Mammary epithelial cell (primary cell): ENCODE measurements at regions of chr6 and their contacts with region 1.

Region 1: DNA sequence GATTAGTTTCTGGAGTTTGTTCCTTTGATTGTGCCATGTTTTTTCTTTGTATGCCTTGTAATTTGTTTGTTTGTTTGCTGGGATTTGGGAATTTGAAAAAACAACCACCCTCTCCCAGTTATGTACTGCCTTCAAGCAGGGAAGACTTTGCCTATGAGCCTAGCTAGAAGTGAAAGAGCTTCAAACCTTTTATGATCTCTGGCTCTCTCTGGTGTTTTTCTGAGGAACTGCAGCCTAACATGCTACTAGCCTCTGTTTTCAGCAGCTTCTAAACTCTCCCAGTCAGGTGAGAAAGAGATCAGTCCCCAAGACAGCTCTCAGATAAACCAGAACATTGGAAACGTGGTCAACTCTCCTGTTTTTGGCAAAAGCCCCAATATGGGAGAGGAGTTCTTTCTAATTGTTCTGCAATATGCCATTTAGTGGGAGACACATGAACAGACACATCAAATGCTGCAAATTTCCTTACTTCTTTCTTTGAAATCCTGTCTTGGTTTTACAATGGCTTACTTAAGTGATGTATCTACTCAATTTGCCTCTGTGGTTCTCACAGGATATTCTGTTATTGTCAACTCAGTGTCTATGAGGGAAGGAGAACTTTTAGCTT is 58.9 kb upstream of the SERINC1 start:
- DNase-seq: peak; percentile 62
- H3K4me3 ChIP-seq: no peak overlapping the region
- H3K27ac ChIP-seq: no peak overlapping the region
- H3K4me1 ChIP-seq: no peaks in the 10 kb centered on the region
- H3K27me3 ChIP-seq: peaks cover 5% of the 10 kb centered on the region
- CTCF ChIP-seq: peak; percentile 97 to 99

Region 2: GRCh38 chr6:121680058-121680457 is 850.5 kb before region 1 on chr6:
- CTCF ChIA-PET with region 1: no interaction called
- dilution Hi-C with region 1: no loop called
- in situ Hi-C with region 1: no loop called
- intact Hi-C with region 1: no loop called
- DNase-seq: no peak
- H3K4me3 ChIP-seq: no peak overlapping the region
- H3K27ac ChIP-seq: no peak overlapping the region
- H3K4me1 ChIP-seq: no peaks in the 10 kb centered on the region
- H3K27me3 ChIP-seq: no peaks in the 10 kb centered on the region
- CTCF ChIP-seq: no peak

Region 3: DNA sequence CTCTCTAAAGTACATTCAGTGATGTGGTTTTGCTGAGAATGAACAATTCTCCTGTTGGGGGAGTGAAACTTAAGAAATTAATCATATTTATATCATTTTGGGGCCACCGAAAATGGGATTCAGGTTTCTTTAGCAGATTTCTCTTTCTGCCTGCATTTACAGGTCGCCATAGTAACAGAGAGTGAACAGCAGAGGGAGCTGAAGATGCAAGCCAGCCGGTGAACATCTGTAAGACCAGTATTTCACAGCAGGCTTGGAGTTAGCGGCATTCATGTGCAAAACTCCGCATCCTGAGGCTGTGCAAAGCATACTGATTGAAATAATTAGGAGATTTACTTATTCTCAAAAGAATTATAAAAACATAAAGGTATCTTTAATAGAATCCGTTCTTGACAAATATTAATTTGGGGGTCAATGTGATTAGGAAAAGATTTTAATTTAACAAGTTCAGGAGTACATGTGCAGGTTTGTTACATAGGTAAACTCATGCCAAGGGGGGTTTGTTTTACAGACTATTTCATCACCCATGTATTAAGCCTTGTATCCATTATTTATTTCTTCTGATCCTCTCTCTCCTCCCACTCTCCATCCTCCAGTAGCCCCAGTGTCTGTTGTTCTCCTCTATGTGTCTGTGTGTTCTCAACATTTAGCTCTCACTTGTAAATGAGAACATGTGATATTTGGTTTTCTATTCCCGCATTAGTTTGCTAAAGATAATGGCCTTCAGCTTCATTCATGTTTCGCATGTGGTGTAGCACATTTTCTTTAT is 148.9 kb before region 1 on chr6:
- CTCF ChIA-PET with region 1: interaction called, 3 read pairs
- dilution Hi-C with region 1: no loop called
- in situ Hi-C with region 1: loop called in 1 of 2 experiments (anchors 10 kb)
- intact Hi-C with region 1: no loop called
- DNase-seq: peak; percentile 48
- H3K4me3 ChIP-seq: no peak overlapping the region
- H3K27ac ChIP-seq: no peak overlapping the region
- H3K4me1 ChIP-seq: no peaks in the 10 kb centered on the region
- H3K27me3 ChIP-seq: no peaks in the 10 kb centered on the region
- CTCF ChIP-seq: peak; percentile 70 to 84

Region 4: DNA sequence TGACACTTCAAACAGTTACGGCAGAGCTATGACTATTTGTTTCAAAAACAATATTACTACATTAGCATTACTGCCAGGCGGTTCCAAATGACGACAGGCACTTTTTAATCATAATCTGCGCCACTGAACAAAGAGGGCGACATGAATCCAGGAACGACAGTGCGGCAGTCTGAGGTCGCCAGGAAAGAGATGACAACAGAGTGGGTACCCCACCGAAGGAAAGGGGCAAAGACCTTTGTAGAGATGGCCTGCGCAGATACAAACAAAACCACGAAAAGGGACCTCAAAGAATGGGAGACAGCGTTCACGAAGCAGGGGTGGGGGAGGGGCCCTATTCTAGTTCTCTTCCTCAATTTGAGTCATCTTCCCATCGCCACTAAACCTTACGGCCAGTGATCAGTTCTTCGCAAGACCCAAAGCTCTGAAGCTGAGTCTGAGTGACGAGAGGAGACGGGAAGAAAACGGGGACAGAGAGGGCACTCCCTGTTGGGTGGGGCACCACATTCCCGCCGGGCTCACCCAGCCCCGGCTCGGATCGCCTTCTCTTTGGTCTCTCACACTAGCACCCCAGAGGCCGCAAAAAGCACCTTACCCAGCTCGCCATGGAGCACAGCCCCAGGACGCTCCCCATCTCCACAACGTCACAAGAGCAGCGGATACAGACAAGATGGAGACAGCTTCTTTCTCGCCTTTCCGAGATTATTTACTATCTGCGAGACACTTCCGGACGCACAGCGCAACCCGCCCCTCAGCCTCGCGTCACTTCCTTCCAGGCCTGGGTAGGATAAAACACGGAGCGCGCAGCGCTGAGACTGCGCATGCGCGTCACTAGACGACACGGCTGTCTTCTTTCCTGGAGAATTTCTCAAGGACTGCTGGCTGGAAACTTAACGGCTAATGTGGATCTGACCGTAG is 59.2 kb before region 1 on chr6 and contains the start of gene SERINC1:
- CTCF ChIA-PET with region 1: no interaction called
- dilution Hi-C with region 1: no loop called
- in situ Hi-C with region 1: no loop called
- intact Hi-C with region 1: loop called (anchors 5 kb)
- DNase-seq: peak; percentile 90
- H3K4me3 ChIP-seq: peak within 1 kb of the TSS; percentile 59 to 93 (median 68)
- H3K27ac ChIP-seq: peak within 1 kb of the TSS; percentile 95
- H3K4me1 ChIP-seq: peaks cover 5% of the 10 kb centered on the region
- H3K27me3 ChIP-seq: no peaks in the 10 kb centered on the region
- CTCF ChIP-seq: no peak
- total RNA-seq, gene SERINC1: 97.6 to 153 TPM

Region 5: GRCh38 chr6:122491919-122492555 is 38.5 kb before region 1 on chr6:
- CTCF ChIA-PET with region 1: interaction called, 10 read pairs
- dilution Hi-C with region 1: no loop called
- in situ Hi-C with region 1: no loop called
- intact Hi-C with region 1: loop called (anchors 1 kb)
- DNase-seq: peak; percentile 60
- H3K4me3 ChIP-seq: no peak overlapping the region
- H3K27ac ChIP-seq: no peak overlapping the region
- H3K4me1 ChIP-seq: no peaks in the 10 kb centered on the region
- H3K27me3 ChIP-seq: no peaks in the 10 kb centered on the region
- CTCF ChIP-seq: peak; percentile 91 to 93

Region 6: GRCh38 chr6:122620879-122621278 is 90.3 kb after region 1 on chr6:
- CTCF ChIA-PET with region 1: no interaction called
- dilution Hi-C with region 1: no loop called
- in situ Hi-C with region 1: no loop called
- intact Hi-C with region 1: no loop called
- DNase-seq: peak; percentile 19
- H3K4me3 ChIP-seq: no peak overlapping the region
- H3K27ac ChIP-seq: no peak overlapping the region
- H3K4me1 ChIP-seq: no peaks in the 10 kb centered on the region
- H3K27me3 ChIP-seq: no peaks in the 10 kb centered on the region
- CTCF ChIP-seq: no peak